Caco-2 (cell line): ENCODE measurements at regions of chr12 and their contacts with region 1.

Region 1: DNA sequence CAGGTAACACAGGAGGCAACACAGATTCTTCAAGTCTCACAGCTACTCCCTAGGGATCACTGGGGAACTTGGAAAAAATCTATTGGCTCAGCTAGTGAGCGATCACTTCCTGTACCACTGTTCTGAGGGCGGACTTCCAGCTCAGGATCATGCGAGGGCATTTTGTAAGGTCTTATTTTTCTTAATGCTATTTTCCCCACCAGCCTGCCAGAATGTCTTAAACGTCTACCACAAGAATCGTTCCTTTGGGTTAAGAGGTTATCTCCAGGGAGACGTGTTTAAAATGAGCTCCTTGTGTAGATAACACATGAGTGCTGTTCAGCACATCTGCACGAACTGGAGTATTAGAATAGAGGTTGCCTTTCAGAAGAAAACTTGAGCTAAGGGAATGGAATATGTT is 162.6 kb downstream of the ETNK1 start:
- DNase-seq: no peak
- H3K4me3 ChIP-seq: no peak overlapping the region
- H3K4me3 Mint-ChIP-seq: no peak overlapping the region
- H3K27ac Mint-ChIP-seq: no peak overlapping the region
- H3K4me1 ChIP-seq: peaks cover 11% of the 10 kb centered on the region
- H3K4me1 Mint-ChIP-seq: peaks cover 7% of the 10 kb centered on the region
- H3K27me3 ChIP-seq: no peaks in the 10 kb centered on the region
- H3K27me3 Mint-ChIP-seq: peaks cover 7% of the 10 kb centered on the region
- CTCF ChIP-seq: no peak

Region 2: GRCh38 chr12:22715254-22715653 is 72.3 kb before region 1 on chr12:
- CTCF ChIA-PET with region 1: no interaction called
- POLR2A ChIA-PET with region 1: no interaction called
- intact Hi-C with region 1: loop called (anchors 5 kb)
- DNase-seq: no peak
- H3K4me3 ChIP-seq: no peak overlapping the region
- H3K4me3 Mint-ChIP-seq: no peak overlapping the region
- H3K27ac Mint-ChIP-seq: no peak overlapping the region
- H3K4me1 ChIP-seq: no peaks in the 10 kb centered on the region
- H3K4me1 Mint-ChIP-seq: no peaks in the 10 kb centered on the region
- H3K27me3 ChIP-seq: no peaks in the 10 kb centered on the region; the same call in 1 of the 2 replicates
- H3K27me3 Mint-ChIP-seq: peaks cover 8% of the 10 kb centered on the region
- CTCF ChIP-seq: no peak

Region 3: DNA sequence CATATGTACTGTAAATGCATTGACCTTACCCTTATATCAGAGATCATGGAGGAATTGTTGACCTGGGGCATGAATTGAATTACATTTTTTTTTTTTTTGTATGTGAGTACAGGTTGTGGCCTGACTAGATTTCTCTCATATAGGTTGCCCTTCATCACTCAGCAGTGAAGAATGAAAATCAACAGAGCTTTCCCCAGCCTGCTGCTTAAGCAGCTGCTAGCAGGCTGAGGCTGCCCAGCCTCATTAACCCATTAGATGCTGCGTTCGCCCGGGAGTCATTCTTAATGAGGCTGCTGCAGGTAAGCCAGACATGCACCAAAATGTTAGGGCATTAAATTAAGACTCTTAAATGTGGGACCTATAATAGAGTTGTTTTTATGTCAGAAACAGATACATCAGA is 73.4 kb after region 1 on chr12:
- CTCF ChIA-PET with region 1: no interaction called
- POLR2A ChIA-PET with region 1: no interaction called
- intact Hi-C with region 1: no loop called
- DNase-seq: no peak
- H3K4me3 ChIP-seq: no peak overlapping the region
- H3K4me3 Mint-ChIP-seq: no peak overlapping the region
- H3K27ac Mint-ChIP-seq: no peak overlapping the region
- H3K4me1 ChIP-seq: peaks cover 6% of the 10 kb centered on the region; the same call in 1 of the 2 replicates
- H3K4me1 Mint-ChIP-seq: peaks cover 16% of the 10 kb centered on the region
- H3K27me3 ChIP-seq: no peaks in the 10 kb centered on the region
- H3K27me3 Mint-ChIP-seq: peaks cover 14% of the 10 kb centered on the region
- CTCF ChIP-seq: no peak